Colonic mucosa (tissue), 4 donors: ENCODE measurements at regions of chr3 and their contacts with region 1.

Region 1: GRCh38 chr3:10758304-10759061 is 57.5 kb upstream of the SLC6A11 start:
- DNase-seq: peak; percentile 25
- H3K4me3 ChIP-seq: no peak overlapping the region
- H3K27ac ChIP-seq: no peak overlapping the region
- H3K4me1 ChIP-seq: no peaks in the 10 kb centered on the region
- H3K27me3 ChIP-seq: no peaks in the 10 kb centered on the region
- CTCF ChIP-seq: peak; percentile 71

Region 2: GRCh38 chr3:10883478-10884234 is 125.2 kb after region 1 on chr3:
- intact Hi-C with region 1: loop called (anchors 5 kb)
- DNase-seq: no peak
- H3K4me3 ChIP-seq: no peak overlapping the region
- H3K27ac ChIP-seq: no peak overlapping the region
- H3K4me1 ChIP-seq: no peaks in the 10 kb centered on the region
- H3K27me3 ChIP-seq: no peaks in the 10 kb centered on the region
- CTCF ChIP-seq: peak; percentile 20